ENCODE measurements at regions of chr2 and their contacts with region 1.

Region 1: DNA sequence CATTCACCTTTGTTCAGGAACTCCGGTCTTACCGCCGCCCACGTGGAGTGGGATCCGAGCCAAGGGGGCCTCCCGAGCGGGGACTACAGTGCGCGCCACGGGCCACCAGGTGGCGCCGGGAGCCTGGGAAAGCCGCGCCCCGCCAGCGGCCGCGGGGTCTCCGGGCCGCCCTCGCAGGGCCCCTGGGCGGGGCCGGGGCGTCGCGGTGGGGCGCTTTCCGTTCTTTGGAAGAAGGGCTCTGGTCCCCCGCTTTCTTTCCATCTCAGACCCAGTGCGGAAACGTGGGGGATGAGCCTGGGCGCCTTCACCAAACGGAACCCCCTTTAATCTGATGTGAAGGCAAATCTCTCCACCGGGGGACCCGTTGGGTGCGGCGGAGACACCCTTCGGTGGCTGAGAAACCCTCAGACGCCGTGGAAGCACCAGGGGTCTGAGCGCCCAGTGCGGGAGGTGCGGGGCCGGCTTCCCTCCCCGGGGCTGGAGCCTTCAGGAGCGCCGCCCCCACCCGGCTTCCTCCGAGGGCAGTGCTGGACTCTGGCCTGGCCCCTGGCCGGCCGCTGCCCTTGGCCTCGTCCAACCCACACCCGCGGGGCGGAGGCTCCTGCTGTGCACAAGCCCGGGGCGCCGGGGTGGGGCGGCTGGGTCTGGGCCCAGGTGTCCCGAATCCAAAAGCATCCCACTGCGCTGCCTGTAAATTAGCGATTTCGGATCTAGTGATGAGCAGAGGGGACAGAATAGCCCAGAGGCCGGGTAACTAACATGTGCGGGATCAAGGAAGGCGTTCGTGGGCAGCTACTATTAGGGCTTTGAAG is 44.6 kb downstream of the GORASP2 start:
- DNase-seq: peak; percentile 65 to 93
- H3K4me3 ChIP-seq: peak overlapping the region; percentile 70
- H3K27ac ChIP-seq: no peak overlapping the region
- H3K4me1 ChIP-seq: peaks cover 5% of the 10 kb centered on the region; the same call in 1 of the 2 replicates
- H3K27me3 ChIP-seq: no peaks in the 10 kb centered on the region
- CTCF ChIP-seq: peak; percentile 72

Region 2: GRCh38 chr2:170928824-170929685 is 44.6 kb before region 1 on chr2 and contains the start of gene GORASP2:
- CTCF ChIA-PET with region 1: no interaction called
- POLR2A ChIA-PET with region 1: no interaction called
- intact Hi-C with region 1: loop called (anchors 2 kb)
- DNase-seq: peak; percentile 98 to 99
- H3K4me3 ChIP-seq: peak within 1 kb of the TSS; percentile 94
- H3K27ac ChIP-seq: peak within 1 kb of the TSS; percentile 89
- H3K4me1 ChIP-seq: peaks cover 29% of the 10 kb centered on the region
- H3K27me3 ChIP-seq: no peaks in the 10 kb centered on the region
- CTCF ChIP-seq: peak; percentile 93
- total RNA-seq, gene GORASP2: 74.7 and 110 TPM in 2 replicates

Region 3: GRCh38 chr2:171008550-171009205 is 35.0 kb after region 1 on chr2:
- CTCF ChIA-PET with region 1: no interaction called
- POLR2A ChIA-PET with region 1: no interaction called
- intact Hi-C with region 1: no loop called
- DNase-seq: no peak
- H3K4me3 ChIP-seq: no peak overlapping the region
- H3K27ac ChIP-seq: no peak overlapping the region
- H3K4me1 ChIP-seq: no peaks in the 10 kb centered on the region
- H3K27me3 ChIP-seq: no peaks in the 10 kb centered on the region
- CTCF ChIP-seq: no peak

Region 4: GRCh38 chr2:171244970-171245782 is 271.5 kb after region 1 on chr2:
- CTCF ChIA-PET with region 1: no interaction called
- POLR2A ChIA-PET with region 1: no interaction called
- intact Hi-C with region 1: loop called (anchors 5 kb)
- DNase-seq: peak; percentile 13 to 67
- H3K4me3 ChIP-seq: no peak overlapping the region
- H3K27ac ChIP-seq: peak overlapping the region; percentile 99
- H3K4me1 ChIP-seq: peaks cover 26% of the 10 kb centered on the region
- H3K27me3 ChIP-seq: no peaks in the 10 kb centered on the region
- CTCF ChIP-seq: no peak

Region 5: GRCh38 chr2:171433763-171434670 is 460.3 kb after region 1 on chr2 and contains the starts of genes DCAF17 and METTL8:
- CTCF ChIA-PET with region 1: no interaction called
- POLR2A ChIA-PET with region 1: interaction called, 15 read pairs
- intact Hi-C with region 1: loop called (anchors 1 kb)
- DNase-seq: peak; percentile 95 to 98
- H3K4me3 ChIP-seq: peak within 1 kb of the TSS; percentile 64
- H3K27ac ChIP-seq: peak within 1 kb of the TSS; percentile 93
- H3K4me1 ChIP-seq: peaks cover 25% of the 10 kb centered on the region
- H3K27me3 ChIP-seq: no peaks in the 10 kb centered on the region
- CTCF ChIP-seq: peak; percentile 50
- total RNA-seq, gene DCAF17: 22.0 and 22.1 TPM in 2 replicates
- total RNA-seq, gene METTL8: 21.8 and 24.3 TPM in 2 replicates

Region 6: DNA sequence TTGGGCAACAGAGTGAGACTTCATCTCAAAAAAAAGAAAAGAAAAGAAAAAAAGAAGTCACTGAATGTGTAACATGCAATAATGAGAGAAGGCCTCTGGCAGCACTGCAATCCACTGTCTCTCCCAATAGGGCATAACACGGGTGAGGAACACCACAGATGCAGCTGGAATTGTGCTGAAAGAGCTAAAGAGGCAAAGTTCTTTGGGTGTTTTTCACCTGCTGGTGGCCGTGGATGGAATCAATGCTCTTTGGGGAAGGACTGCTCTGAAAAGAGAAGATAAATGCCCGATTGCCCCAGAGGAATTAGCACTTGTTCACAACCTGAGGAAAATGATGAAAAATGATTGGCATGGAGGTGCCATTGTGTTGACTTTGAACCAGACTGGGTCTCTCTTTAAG is 517.6 kb after region 1 on chr2:
- CTCF ChIA-PET with region 1: interaction called, 23 read pairs
- POLR2A ChIA-PET with region 1: no interaction called
- intact Hi-C with region 1: no loop called
- DNase-seq: no peak
- H3K4me3 ChIP-seq: no peak overlapping the region
- H3K27ac ChIP-seq: no peak overlapping the region
- H3K4me1 ChIP-seq: no peaks in the 10 kb centered on the region
- H3K27me3 ChIP-seq: no peaks in the 10 kb centered on the region
- CTCF ChIP-seq: no peak

Region 7: DNA sequence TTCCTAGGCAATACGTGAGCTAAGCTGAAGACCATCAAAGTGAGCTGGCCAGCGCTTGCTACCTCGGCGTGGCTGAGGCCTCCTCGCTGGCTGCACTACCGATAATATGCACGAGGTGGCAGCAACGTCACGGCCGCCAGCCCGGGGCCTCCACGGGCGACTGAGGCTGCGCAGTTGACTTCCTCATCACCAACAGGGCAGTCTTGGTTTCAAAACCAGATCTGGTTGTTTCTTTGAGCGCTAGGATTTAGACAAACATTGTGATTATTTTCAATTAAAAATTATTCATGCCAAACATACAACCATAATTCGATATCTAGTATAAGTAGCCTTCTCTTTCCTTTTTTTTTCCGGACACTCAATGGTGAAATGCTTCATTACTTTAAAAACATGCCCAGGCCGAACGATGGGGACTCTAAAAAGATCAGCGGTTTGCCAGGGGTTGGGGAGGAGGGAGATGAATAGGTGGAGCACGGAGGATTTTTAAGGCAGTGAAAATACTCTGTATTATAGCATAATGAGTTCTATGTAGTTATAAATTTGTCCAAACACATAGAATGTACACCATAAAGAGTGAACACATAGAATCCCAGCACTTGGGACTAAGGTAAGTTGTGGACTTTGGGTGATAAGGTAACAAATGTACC is 600.6 kb after region 1 on chr2:
- CTCF ChIA-PET with region 1: no interaction called
- POLR2A ChIA-PET with region 1: no interaction called
- intact Hi-C with region 1: loop called (anchors 5 kb)
- DNase-seq: peak; percentile 55 to 86
- H3K4me3 ChIP-seq: no peak overlapping the region
- H3K27ac ChIP-seq: no peak overlapping the region
- H3K4me1 ChIP-seq: no peaks in the 10 kb centered on the region
- H3K27me3 ChIP-seq: no peaks in the 10 kb centered on the region
- CTCF ChIP-seq: peak; percentile 98